Activated CD4-positive, alpha-beta memory T cell treated with anti-CD3 and anti-CD28 coated beads, Interleukin-2, amount 10 ng/mL, durations not matched to agents 7 days and 5 days (primary cell): ENCODE measurements at regions of chr9 and their contacts with region 1.

Region 1: DNA sequence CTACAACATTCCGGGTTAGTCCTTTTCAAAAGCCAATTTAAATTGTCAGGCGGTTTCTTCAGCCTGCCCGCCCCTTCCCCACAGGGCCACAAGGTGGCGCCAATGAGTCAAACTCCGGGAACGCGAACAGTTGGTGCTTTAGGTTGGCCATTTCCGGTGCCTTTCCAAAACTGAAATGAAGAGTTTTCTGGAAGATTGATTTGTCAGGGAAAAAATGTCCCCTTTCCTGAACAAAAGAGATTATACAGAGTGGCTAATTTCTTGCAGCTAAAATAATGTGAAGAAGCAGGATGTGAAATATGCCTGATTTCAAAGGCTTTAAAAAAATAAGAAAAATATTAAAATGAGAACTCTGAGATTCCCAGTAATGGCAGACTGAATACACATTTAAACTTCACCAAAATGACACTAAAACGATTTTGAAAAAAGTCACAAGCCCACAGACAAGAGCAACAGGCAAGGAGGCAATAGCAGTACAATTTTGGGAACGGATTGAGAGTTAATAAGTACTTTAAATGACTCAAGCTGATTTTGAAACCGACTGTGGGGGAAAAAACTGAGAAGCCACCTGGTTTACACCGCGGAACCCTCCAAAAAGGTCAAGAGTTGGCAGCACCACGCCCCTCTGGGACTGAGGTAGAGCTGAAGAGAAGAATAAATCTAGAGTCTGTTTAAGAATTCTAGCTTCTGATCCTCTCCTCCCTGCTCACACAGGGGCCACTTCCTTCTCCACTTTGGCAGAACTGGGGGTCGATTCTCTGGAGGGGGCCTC is 45.7 kb downstream of the SLC46A2 start:
- DNase-seq: peak; percentile 73
- H3K4me3 Mint-ChIP-seq: no peak overlapping the region
- H3K27ac Mint-ChIP-seq: no peak overlapping the region
- H3K4me1 Mint-ChIP-seq: peaks cover 18% of the 10 kb centered on the region
- H3K27me3 Mint-ChIP-seq: no peaks in the 10 kb centered on the region

Region 2: DNA sequence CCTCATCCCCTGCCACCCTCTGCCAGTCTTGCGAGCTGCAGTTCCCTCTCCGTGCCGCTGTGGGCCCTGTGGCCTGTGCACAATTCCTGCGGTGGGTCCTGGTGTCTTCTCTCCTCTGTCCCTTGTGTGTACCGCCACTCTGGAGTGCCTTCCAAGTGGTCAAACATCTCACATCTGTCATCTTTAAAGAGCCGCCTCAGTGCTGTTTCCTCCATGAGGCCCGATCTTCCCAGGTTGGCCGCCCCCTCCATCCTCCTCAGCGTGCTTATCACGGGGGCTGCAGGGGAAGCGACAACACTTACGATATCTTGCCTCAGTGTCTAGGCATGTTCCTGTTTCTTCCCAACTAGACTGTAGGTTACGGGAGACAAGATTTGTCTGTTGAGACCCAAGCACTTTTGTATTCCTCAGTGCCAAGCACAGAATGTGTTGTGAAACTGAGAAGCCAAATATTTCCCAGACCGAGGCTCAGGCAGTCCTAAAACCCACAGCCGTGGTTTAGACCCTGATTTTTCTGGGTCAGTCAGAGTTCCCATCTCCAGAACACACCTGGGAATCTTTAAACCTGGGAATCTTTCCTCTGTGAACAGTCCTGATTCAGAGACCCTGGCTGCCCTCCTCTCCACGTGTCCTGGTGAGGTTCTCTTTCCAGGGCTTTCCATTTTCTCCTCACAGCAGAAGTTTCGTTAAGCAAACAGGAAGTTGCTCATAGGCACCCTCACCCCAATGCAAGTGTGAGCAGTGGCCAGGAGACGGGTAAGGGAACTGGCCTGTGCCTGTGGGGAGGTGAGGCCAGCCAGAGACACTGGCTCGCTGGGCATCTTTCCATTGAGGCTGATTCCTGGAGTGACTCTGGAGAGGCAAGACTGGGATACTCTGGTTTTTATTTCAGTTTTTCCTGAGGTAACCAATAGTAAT is 16.9 kb after region 1 on chr9:
- CTCF ChIA-PET with region 1: no interaction called
- POLR2A ChIA-PET with region 1: no interaction called
- DNase-seq: no peak
- H3K4me3 Mint-ChIP-seq: no peak overlapping the region
- H3K27ac Mint-ChIP-seq: no peak overlapping the region
- H3K4me1 Mint-ChIP-seq: peaks cover 7% of the 10 kb centered on the region
- H3K27me3 Mint-ChIP-seq: no peaks in the 10 kb centered on the region

Region 3: GRCh38 chr9:112898872-112899311 is 53.9 kb after region 1 on chr9:
- CTCF ChIA-PET with region 1: interaction called, 51 read pairs
- POLR2A ChIA-PET with region 1: interaction called, 3 read pairs
- DNase-seq: no peak
- H3K4me3 Mint-ChIP-seq: no peak overlapping the region
- H3K27ac Mint-ChIP-seq: no peak overlapping the region
- H3K4me1 Mint-ChIP-seq: peaks cover 29% of the 10 kb centered on the region
- H3K27me3 Mint-ChIP-seq: peaks cover 42% of the 10 kb centered on the region

Region 4: GRCh38 chr9:112905084-112905483 is 60.1 kb after region 1 on chr9:
- CTCF ChIA-PET with region 1: interaction called, 51 read pairs
- POLR2A ChIA-PET with region 1: interaction called, 3 read pairs
- DNase-seq: no peak
- H3K4me3 Mint-ChIP-seq: no peak overlapping the region
- H3K27ac Mint-ChIP-seq: no peak overlapping the region
- H3K4me1 Mint-ChIP-seq: peaks cover 7% of the 10 kb centered on the region
- H3K27me3 Mint-ChIP-seq: peaks cover 22% of the 10 kb centered on the region